CD8-positive, alpha-beta T cell (primary cell): ENCODE measurements at regions of chr7 and their contacts with region 1.

Region 1: GRCh38 chr7:133230591-133231194 is 22.2 kb upstream of the EXOC4 start:
- DNase-seq: peak in 5 of 9 experiments; percentile 7 to 62 (median 39)
- ATAC-seq: no peak
- H3K4me3 ChIP-seq: no peak overlapping the region
- H3K4me3 Mint-ChIP-seq: no peak overlapping the region
- H3K27ac ChIP-seq: no peak overlapping the region
- H3K27ac Mint-ChIP-seq: no peak overlapping the region
- H3K4me1 ChIP-seq: no peaks in the 10 kb centered on the region
- H3K4me1 Mint-ChIP-seq: no peaks in the 10 kb centered on the region
- H3K27me3 ChIP-seq: no peaks in the 10 kb centered on the region
- H3K27me3 Mint-ChIP-seq: peaks cover 5% of the 10 kb centered on the region
- CTCF ChIP-seq: peak; percentile 64

Region 2: GRCh38 chr7:131688738-131689661 is 1541.7 kb before region 1 on chr7:
- CTCF ChIA-PET with region 1: no interaction called
- POLR2A ChIA-PET with region 1: no interaction called
- intact Hi-C with region 1: loop called in 1 of 2 experiments (anchors 5 kb)
- DNase-seq: peak; percentile 14 to 74 (median 53)
- ATAC-seq: peak; percentile 65
- H3K4me3 ChIP-seq: no peak overlapping the region
- H3K4me3 Mint-ChIP-seq: no peak overlapping the region
- H3K27ac ChIP-seq: no peak overlapping the region
- H3K27ac Mint-ChIP-seq: no peak overlapping the region
- H3K4me1 ChIP-seq: no peaks in the 10 kb centered on the region
- H3K4me1 Mint-ChIP-seq: peaks cover 3% of the 10 kb centered on the region
- H3K27me3 ChIP-seq: peaks cover 0 to 5% of the 10 kb centered on the region in 2 experiments
- H3K27me3 Mint-ChIP-seq: peaks cover 38% of the 10 kb centered on the region
- CTCF ChIP-seq: peak; percentile 85

Region 3: DNA sequence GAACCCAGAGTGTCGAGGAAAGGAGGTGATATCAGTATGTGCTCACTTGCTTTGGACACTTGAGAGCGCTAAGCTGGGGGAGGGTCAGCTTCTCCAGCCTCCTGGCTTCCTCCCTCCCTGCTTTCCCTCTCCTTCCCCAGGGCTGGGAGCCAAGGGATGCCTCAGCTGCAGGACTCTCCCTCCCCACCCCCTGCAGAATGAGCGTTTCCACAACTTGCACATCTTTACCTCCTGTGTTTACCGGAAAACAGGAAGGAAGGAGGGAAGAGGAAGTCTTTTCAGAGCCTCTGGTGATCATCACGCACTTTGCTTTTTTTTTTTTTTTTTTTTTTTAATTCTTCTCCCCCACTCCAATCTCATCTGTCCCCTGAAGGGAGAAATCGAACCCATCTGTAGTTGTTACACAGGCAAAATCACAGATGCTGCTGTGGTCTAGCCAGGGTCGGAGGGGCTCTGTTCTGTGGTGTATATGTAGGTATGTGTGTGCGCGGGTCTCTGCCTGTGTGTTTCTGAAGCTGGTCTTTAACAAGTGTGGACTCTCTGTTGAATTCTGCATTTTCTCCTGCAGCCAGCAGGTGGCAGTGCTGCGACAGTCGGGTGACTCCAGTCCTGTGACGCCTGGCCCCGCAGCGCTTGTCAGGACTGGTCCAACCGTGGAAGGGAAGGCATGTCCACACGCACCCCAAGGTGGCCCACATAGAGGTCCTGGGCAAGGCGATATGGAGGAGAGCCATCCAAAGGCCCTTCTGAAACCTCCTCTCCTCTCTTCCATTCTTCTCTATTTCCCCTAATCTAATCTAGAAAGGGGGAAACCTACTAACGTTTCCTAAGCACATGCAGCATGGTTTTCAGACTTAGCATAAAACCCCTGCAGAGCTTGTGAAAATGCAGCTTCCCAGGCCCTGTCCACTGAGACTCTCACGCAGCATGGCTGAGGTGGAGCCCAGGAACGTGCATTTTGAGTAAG is 912.1 kb before region 1 on chr7:
- CTCF ChIA-PET with region 1: no interaction called
- POLR2A ChIA-PET with region 1: no interaction called
- intact Hi-C with region 1: loop called in 1 of 2 experiments (anchors 1 kb)
- DNase-seq: peak; percentile 49 to 85 (median 76)
- ATAC-seq: peak; percentile 88
- H3K4me3 ChIP-seq: no peak overlapping the region
- H3K4me3 Mint-ChIP-seq: peak overlapping the region; percentile 42
- H3K27ac ChIP-seq: no peak overlapping the region
- H3K27ac Mint-ChIP-seq: no peak overlapping the region
- H3K4me1 ChIP-seq: peaks cover 9% of the 10 kb centered on the region
- H3K4me1 Mint-ChIP-seq: peaks cover 8% of the 10 kb centered on the region
- H3K27me3 ChIP-seq: peaks cover 9 to 12% of the 10 kb centered on the region in 2 experiments
- H3K27me3 Mint-ChIP-seq: peaks cover 31% of the 10 kb centered on the region
- CTCF ChIP-seq: peak; percentile 87

Region 4: GRCh38 chr7:133118261-133118660 is 112.4 kb before region 1 on chr7:
- CTCF ChIA-PET with region 1: no interaction called
- POLR2A ChIA-PET with region 1: no interaction called
- intact Hi-C with region 1: no loop called
- DNase-seq: no peak
- ATAC-seq: no peak
- H3K4me3 ChIP-seq: no peak overlapping the region
- H3K4me3 Mint-ChIP-seq: no peak overlapping the region
- H3K27ac ChIP-seq: no peak overlapping the region
- H3K27ac Mint-ChIP-seq: no peak overlapping the region
- H3K4me1 ChIP-seq: no peaks in the 10 kb centered on the region
- H3K4me1 Mint-ChIP-seq: peaks cover 3% of the 10 kb centered on the region
- H3K27me3 ChIP-seq: no peaks in the 10 kb centered on the region
- H3K27me3 Mint-ChIP-seq: peaks cover 11% of the 10 kb centered on the region
- CTCF ChIP-seq: no peak